Activated naive CD4-positive, alpha-beta T cell treated with anti-CD3 and anti-CD28 coated beads for 36 hours (primary cell): ENCODE measurements at regions of chr17 and their contacts with region 1.

Region 1: GRCh38 chr17:78128551-78129350 is at the start of gene TMC6:
- DNase-seq: peak; percentile 85
- H3K4me3 Mint-ChIP-seq: peak within 1 kb of the TSS; percentile 96
- H3K27ac Mint-ChIP-seq: peak within 1 kb of the TSS; percentile 98
- H3K4me1 Mint-ChIP-seq: peaks cover 50% of the 10 kb centered on the region
- H3K27me3 Mint-ChIP-seq: no peaks in the 10 kb centered on the region
- total RNA-seq, gene TMC6: 79.0 to 85.6 TPM

Region 2: GRCh38 chr17:77451245-77451893 is 677.4 kb before region 1 on chr17:
- CTCF ChIA-PET with region 1: no interaction called
- intact Hi-C with region 1: loop called (anchors 5 kb)
- DNase-seq: peak; percentile 83
- H3K4me3 Mint-ChIP-seq: peak overlapping the region; percentile 86
- H3K27ac Mint-ChIP-seq: peak overlapping the region; percentile 100
- H3K4me1 Mint-ChIP-seq: peaks cover 42% of the 10 kb centered on the region
- H3K27me3 Mint-ChIP-seq: no peaks in the 10 kb centered on the region

Region 3: GRCh38 chr17:78112518-78113226 is 16.1 kb before region 1 on chr17:
- CTCF ChIA-PET with region 1: interaction called, 100 read pairs
- intact Hi-C with region 1: no loop called
- DNase-seq: peak; percentile 84
- H3K4me3 Mint-ChIP-seq: no peak overlapping the region
- H3K27ac Mint-ChIP-seq: peak overlapping the region; percentile 88
- H3K4me1 Mint-ChIP-seq: peaks cover 37% of the 10 kb centered on the region
- H3K27me3 Mint-ChIP-seq: no peaks in the 10 kb centered on the region

Region 4: GRCh38 chr17:78168242-78168902 is 39.6 kb after region 1 on chr17 and contains the start of gene SYNGR2:
- CTCF ChIA-PET with region 1: interaction called, 3 read pairs
- intact Hi-C with region 1: loop called (anchors 1 kb)
- DNase-seq: peak; percentile 87
- H3K4me3 Mint-ChIP-seq: peak within 1 kb of the TSS; percentile 75
- H3K27ac Mint-ChIP-seq: peak within 1 kb of the TSS; percentile 85
- H3K4me1 Mint-ChIP-seq: peaks cover 37% of the 10 kb centered on the region
- H3K27me3 Mint-ChIP-seq: no peaks in the 10 kb centered on the region
- total RNA-seq, gene SYNGR2: 96.3 to 103 TPM

Region 5: DNA sequence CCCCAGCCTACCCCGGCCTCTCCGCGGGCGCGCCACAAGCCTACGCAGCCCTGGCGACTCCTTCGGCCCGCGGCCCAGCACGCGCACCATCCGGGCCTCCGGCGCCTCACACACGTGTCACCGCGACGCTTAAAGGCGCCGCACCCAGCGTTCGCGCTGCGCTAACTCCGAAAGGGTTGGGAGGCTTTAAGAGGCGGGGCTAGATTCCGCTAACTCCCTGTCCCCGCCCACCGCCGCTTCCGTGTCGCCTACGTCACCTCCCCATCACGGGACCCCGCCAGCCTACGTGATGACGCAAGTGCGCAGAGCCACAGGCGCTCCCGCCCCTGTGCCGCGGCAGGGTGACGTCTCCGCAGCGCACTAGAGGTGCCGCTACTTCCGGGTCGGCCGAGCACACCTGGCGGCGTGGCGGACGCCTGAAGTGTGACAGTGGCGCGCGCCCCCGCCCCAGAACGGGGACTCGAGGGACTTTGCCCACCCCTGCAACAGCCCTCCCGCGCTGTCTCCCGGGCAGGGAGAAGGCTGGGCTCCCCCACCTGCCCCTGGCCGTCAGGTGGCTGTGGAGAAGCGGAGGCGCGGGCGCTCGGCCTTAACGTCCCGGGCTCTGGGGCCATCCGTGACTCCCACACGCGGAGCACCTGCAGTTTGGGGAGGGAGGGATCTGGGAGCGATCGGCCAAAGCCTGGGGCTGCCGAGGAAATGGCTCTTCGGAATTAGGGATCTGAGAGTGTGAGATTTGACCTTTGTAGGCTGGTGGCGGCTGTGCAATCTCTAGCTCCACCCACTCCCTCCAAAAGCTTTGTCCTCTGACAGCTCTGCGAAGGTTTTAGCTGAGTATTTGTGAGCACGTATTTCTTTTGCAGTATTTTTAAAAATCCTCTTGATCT is 712.2 kb after region 1 on chr17 and contains the start of gene USP36:
- CTCF ChIA-PET with region 1: no interaction called
- intact Hi-C with region 1: loop called (anchors 5 kb)
- DNase-seq: peak; percentile 100
- H3K4me3 Mint-ChIP-seq: peak within 1 kb of the TSS; percentile 96
- H3K27ac Mint-ChIP-seq: peak within 1 kb of the TSS; percentile 93
- H3K4me1 Mint-ChIP-seq: peaks cover 44% of the 10 kb centered on the region
- H3K27me3 Mint-ChIP-seq: no peaks in the 10 kb centered on the region
- total RNA-seq, gene USP36: 65.3 to 68.7 TPM